GM18951 (cell line): ENCODE measurements at regions of chr20 and their contacts with region 1.

Region 1: GRCh38 chr20:20824924-20825584 is 112.6 kb upstream of the RALGAPA2 start:
- POLR2A ChIP-seq: no peak

Region 2: DNA sequence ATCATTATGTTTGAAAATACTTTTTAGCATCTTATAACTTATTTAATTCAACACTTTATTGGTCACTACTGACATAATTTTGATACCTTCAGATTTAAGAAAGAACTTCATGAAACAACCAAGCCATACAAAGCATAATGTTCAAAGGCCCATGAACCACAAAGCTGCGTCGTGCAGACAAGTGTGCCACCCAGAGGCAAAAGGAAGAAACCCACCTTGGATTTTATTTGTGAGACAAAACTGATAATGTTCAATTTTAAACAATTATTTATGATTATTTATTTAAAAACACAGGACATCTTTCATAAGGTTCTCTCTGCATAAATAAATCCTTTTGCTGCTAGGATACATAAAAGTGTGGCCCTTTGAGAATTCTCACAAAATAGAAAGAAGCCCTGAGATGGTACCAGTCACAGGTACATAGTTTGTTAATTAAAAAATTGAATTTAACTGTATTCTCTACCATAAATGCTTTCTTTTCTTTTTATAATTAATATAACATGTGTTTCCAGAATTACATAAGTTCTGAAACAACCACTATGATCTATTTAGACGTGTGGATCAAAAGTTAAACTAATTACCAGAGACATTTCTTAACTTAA is 256.3 kb before region 1 on chr20:
- in situ Hi-C with region 1: no loop called
- POLR2A ChIP-seq: no peak

Region 3: GRCh38 chr20:20664795-20665589 is 160.1 kb before region 1 on chr20:
- in situ Hi-C with region 1: loop called (anchors 10 kb)
- POLR2A ChIP-seq: no peak

Region 4: DNA sequence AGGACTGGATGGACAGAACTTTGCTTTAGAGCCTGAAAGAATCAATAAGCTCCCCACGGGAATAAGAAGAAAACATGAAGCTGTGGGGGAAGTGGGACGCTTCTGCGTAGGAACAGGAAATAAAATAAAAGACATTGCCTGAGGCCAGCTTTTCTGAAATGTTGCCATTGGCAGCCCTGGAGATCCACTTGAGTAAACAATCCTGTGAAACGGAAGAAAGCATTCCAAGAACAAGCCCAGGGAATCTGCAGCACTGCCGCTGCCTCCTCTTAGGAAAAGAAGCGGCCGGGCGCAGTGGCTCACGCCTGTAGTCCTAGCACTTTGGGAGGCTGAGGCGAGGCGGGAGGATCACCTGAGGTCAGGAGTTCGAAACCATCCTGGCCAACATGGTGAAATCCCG is 69.7 kb after region 1 on chr20:
- in situ Hi-C with region 1: no loop called
- POLR2A ChIP-seq: no peak

Region 5: GRCh38 chr20:20915835-20916234 is 90.8 kb after region 1 on chr20:
- in situ Hi-C with region 1: no loop called
- POLR2A ChIP-seq: no peak

Region 6: GRCh38 chr20:21235484-21236445 is 410.7 kb after region 1 on chr20:
- in situ Hi-C with region 1: loop called (anchors 25 kb)
- POLR2A ChIP-seq: no peak